ENCODE measurements at regions of chr4 and their contacts with region 1.

Region 1: GRCh38 chr4:176185067-176185466 is 10.3 kb downstream of the SPATA4 start:
- DNase-seq: no peak
- H3K4me3 Mint-ChIP-seq: no peak overlapping the region
- H3K27ac Mint-ChIP-seq: no peak overlapping the region
- H3K4me1 Mint-ChIP-seq: peaks cover 10% of the 10 kb centered on the region
- H3K27me3 Mint-ChIP-seq: no peaks in the 10 kb centered on the region
- CTCF ChIP-seq: no peak

Region 2: GRCh38 chr4:176217510-176217909 is 32.4 kb after region 1 on chr4:
- CTCF ChIA-PET with region 1: no interaction called
- intact Hi-C with region 1: loop called (anchors 1 kb)
- DNase-seq: no peak
- H3K4me3 Mint-ChIP-seq: no peak overlapping the region
- H3K27ac Mint-ChIP-seq: no peak overlapping the region
- H3K4me1 Mint-ChIP-seq: no peaks in the 10 kb centered on the region
- H3K27me3 Mint-ChIP-seq: no peaks in the 10 kb centered on the region
- CTCF ChIP-seq: no peak

Region 3: GRCh38 chr4:176259330-176260090 is 74.4 kb after region 1 on chr4:
- CTCF ChIA-PET with region 1: no interaction called
- intact Hi-C with region 1: no loop called
- DNase-seq: no peak
- H3K4me3 Mint-ChIP-seq: no peak overlapping the region
- H3K27ac Mint-ChIP-seq: no peak overlapping the region
- H3K4me1 Mint-ChIP-seq: no peaks in the 10 kb centered on the region
- H3K27me3 Mint-ChIP-seq: no peaks in the 10 kb centered on the region
- CTCF ChIP-seq: no peak